ENCODE measurements at regions of chr7 and their contacts with region 1.

Region 1: GRCh38 chr7:112939574-112940314 is 146.9 kb downstream of the GPR85 start:
- DNase-seq: peak; percentile 99
- H3K4me3 Mint-ChIP-seq: peak overlapping the region; percentile 94
- H3K27ac Mint-ChIP-seq: peak overlapping the region; percentile 96
- H3K4me1 Mint-ChIP-seq: peaks cover 38% of the 10 kb centered on the region
- H3K27me3 Mint-ChIP-seq: no peaks in the 10 kb centered on the region

Region 2: DNA sequence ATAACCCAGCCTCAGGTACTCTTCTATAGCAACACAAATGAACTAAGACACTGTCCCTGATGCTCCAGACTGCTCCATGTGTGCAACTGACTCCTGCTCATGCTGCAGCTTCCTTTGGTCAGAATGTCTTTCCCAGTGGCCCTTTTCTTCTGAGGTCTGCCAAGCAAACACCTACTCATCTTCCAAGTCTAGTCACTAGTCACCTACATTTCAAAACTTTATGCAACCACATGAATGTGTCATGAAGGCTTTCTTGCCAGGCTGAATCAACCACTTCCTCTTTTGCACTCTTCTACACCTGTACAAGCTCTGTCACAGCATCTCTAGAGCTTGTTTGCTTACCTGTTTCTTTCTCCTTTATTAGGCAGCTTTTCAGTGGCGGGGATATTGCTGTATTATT is 383.1 kb before region 1 on chr7:
- CTCF ChIA-PET with region 1: no interaction called
- intact Hi-C with region 1: loop called (anchors 2 kb)
- DNase-seq: peak; percentile 43
- H3K4me3 Mint-ChIP-seq: no peak overlapping the region
- H3K27ac Mint-ChIP-seq: no peak overlapping the region
- H3K4me1 Mint-ChIP-seq: peaks cover 14% of the 10 kb centered on the region
- H3K27me3 Mint-ChIP-seq: no peaks in the 10 kb centered on the region

Region 3: DNA sequence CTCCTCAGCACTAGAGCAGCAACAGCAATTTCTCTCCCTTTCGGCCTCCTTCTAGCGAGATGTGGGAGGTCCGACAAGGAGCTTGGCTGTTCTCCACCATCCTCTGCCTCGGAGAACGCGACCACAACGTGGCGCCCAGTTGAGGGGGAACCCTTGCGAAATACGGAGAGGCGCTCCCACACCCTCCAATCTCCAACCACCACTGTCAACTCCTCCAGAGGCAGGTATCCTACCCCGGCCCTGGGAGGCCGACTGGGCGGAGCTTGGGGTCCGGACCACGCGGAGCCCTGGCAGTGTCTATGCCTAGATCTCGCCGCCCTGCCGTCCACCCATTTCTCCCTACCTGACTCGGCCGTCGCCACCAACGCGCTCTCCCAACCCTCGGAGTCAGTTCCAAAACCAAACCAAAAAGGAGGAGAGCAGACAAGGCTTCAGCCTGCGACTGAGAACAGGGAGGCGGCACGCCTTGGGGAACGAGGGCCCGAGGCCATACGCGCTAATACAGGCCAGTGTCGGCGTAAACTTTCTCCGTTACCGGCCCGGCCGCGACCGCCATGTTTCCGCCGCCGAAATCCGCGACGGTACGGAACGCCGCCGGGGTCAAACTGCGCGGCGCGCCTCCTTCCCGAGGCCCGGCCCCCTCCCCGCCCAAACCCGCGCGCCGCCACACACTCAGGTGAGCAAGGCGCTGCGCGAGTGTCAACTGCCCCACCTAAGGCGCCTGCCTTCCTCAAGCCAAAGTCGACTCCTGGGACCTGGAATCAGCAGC is 149.7 kb before region 1 on chr7 and contains the start of gene TMEM168:
- CTCF ChIA-PET with region 1: no interaction called
- intact Hi-C with region 1: loop called (anchors 1 kb)
- DNase-seq: peak; percentile 90
- H3K4me3 Mint-ChIP-seq: peak within 1 kb of the TSS; percentile 93
- H3K27ac Mint-ChIP-seq: peak within 1 kb of the TSS; percentile 85
- H3K4me1 Mint-ChIP-seq: peaks cover 43% of the 10 kb centered on the region
- H3K27me3 Mint-ChIP-seq: no peaks in the 10 kb centered on the region
- total RNA-seq, gene TMEM168: 18.6 to 20.4 TPM

Region 4: DNA sequence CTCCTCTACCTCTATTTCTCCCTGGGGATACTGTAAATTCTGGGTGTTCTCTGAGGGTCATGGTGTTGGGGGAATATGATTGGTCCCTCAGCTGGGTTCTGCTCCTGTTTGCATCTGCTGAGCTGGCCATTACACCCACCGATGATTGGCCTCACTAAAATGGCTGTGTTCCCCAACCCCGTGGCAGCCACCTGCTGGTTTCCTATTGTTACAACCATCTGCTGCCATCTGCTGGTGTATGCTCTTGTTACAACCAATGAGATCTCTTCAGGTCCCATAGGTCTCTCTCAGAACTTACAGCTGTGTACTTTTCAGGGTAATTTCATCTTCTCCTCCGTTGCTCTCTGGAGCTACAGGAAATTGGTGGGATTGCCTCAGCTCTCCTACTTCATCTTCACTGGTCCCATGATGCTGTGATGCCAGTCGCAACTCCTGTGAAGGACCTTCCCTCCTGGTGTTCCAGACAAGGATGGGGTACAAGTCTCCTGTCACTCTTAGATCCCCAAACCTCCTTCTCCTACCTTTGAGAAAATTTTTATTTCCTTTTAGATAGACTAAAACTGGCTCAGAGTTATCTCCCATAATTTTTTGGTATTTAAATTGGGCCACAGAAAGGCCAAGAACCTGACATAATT is 482.1 kb after region 1 on chr7:
- CTCF ChIA-PET with region 1: no interaction called
- intact Hi-C with region 1: loop called (anchors 5 kb)
- DNase-seq: peak; percentile 91
- H3K4me3 Mint-ChIP-seq: no peak overlapping the region
- H3K27ac Mint-ChIP-seq: no peak overlapping the region
- H3K4me1 Mint-ChIP-seq: peaks cover 3% of the 10 kb centered on the region
- H3K27me3 Mint-ChIP-seq: peaks cover 2% of the 10 kb centered on the region